Calu3 (cell line): ENCODE measurements at regions of chr2 and their contacts with region 1.

Region 1: DNA sequence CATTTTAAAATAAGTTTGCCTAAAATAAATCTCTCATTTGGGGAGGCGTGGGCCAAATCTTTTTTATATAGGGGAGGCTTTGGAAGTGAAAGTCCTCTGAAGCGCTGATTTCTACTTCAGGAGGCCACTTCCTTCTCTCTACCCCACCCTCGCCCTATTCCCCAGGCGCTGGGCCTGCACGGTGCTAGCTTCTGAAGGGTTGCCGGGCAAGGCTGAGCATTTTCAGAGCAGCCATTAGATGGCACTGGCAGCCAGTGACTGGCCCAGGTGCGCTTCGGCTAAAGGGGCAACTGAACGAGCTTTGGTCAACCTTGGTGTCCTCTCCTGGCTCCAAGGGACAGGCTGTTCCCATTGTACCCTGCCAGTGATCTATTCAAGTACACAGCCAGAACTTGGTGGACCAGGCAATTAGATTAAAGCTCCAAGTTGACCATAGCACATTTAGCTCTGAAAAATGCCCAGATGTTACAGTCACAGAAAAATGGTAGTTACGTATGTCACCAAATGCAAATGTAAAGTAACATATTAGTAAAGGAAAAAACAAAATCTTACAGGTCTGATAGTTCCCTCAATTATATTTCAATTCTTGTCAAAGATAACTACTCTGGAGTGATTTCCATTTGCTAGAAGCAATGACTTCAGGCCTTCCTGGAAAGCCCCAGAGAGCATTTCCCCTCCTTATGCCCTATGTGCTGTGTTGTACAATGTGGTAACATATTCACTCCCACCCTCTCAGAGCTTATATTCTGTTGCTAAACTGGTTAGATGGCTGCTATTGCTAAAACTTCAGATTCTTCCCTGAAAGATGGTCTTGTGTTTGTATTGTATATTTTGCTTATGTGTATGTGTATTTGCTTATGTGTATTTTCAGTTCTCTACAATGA is 2.1 kb downstream of the POMC start:
- DNase-seq: peak; percentile 67
- H3K4me3 Mint-ChIP-seq: no peak overlapping the region
- H3K27ac Mint-ChIP-seq: no peak overlapping the region
- H3K4me1 Mint-ChIP-seq: no peaks in the 10 kb centered on the region
- H3K27me3 Mint-ChIP-seq: peaks cover 91% of the 10 kb centered on the region
- CTCF ChIP-seq: no peak

Region 2: GRCh38 chr2:25201265-25201664 is 35.0 kb after region 1 on chr2:
- CTCF ChIA-PET with region 1: interaction called, 8 read pairs
- intact Hi-C with region 1: loop called (anchors 1 kb)
- DNase-seq: no peak
- H3K4me3 Mint-ChIP-seq: no peak overlapping the region
- H3K27ac Mint-ChIP-seq: no peak overlapping the region
- H3K4me1 Mint-ChIP-seq: peaks cover 23% of the 10 kb centered on the region
- H3K27me3 Mint-ChIP-seq: no peaks in the 10 kb centered on the region
- CTCF ChIP-seq: no peak

Region 3: GRCh38 chr2:25218100-25218499 is 51.9 kb after region 1 on chr2:
- CTCF ChIA-PET with region 1: no interaction called
- intact Hi-C with region 1: no loop called
- DNase-seq: no peak
- H3K4me3 Mint-ChIP-seq: no peak overlapping the region
- H3K27ac Mint-ChIP-seq: no peak overlapping the region
- H3K4me1 Mint-ChIP-seq: no peaks in the 10 kb centered on the region
- H3K27me3 Mint-ChIP-seq: no peaks in the 10 kb centered on the region
- CTCF ChIP-seq: no peak

Region 4: DNA sequence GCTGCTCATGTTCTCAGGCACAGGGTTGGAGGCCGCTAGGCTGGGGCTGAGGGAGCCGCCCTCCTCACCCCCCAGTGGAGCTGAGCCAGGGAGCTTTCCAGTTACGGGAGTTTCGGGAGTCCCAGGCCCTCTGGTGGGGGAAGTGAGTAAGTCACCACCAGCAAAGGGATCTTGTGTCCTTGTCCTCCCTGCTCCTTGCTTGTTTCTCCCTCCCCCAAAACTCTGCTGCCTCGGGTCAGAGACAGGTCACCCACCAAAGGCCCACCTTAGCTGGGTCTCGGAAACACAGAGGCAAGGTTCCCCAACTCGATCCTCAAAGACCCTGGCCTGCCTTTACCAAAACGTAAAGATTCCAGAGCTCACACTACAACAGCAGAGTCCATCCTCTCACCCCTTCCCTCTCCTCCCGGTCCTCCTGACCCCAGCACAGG is 62.6 kb after region 1 on chr2:
- CTCF ChIA-PET with region 1: interaction called, 12 read pairs
- intact Hi-C with region 1: loop called (anchors 2 kb)
- DNase-seq: peak; percentile 76
- H3K4me3 Mint-ChIP-seq: no peak overlapping the region
- H3K27ac Mint-ChIP-seq: no peak overlapping the region
- H3K4me1 Mint-ChIP-seq: no peaks in the 10 kb centered on the region
- H3K27me3 Mint-ChIP-seq: no peaks in the 10 kb centered on the region
- CTCF ChIP-seq: peak; percentile 79